CD8-positive, alpha-beta T cell (primary cell): ENCODE measurements at regions of chr12 and their contacts with region 1.

Region 1: DNA sequence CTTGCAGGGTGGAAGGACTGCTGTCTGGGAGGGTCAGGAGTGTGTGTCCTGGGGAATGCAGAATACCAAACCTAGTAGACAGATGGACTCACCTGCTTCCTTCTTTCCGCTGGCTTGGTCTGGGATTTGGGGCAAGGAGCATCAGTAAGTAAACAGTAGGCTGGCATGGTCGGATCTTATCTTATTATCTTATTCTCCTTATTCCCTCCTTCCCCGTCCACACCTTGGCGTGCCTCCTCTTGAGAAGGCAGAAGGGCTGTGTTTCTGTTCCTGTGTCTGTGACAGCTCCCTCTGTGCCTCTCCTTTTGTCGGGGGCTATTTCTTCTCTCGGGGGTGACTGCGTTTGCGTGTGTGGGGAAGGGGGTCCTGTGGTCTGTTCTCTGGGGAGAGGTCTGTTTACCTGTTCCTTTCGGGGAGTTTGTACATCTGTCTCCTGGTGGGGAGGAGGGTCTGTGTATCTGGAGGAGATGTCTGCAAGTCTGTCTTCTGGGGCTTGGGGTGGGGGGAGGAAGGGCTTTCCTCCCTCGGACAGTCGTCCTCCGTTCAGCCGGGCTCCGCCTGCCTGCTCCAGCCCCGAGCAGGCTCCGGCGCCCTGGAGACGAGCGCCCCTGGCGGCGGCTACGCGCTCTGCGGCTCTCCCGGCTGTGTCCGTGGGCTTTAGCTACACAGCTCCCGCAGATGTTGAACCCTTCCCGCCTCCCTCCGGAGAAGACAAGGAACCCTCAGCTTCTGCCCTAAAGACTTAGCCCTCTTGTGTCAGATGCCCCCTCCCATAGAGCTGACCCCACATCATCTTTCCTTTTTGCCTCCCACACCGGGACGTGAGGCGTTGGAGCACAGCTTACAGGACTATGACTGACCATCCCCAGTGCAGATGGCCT is 4.3 kb downstream of the KRT86 start:
- DNase-seq: peak; percentile 49 to 84 (median 68)
- ATAC-seq: peak; percentile 82
- H3K4me3 ChIP-seq: no peak overlapping the region
- H3K4me3 Mint-ChIP-seq: no peak overlapping the region
- H3K27ac ChIP-seq: no peak overlapping the region
- H3K27ac Mint-ChIP-seq: no peak overlapping the region
- H3K4me1 ChIP-seq: no peaks in the 10 kb centered on the region
- H3K4me1 Mint-ChIP-seq: peaks cover 6% of the 10 kb centered on the region
- H3K27me3 ChIP-seq: peaks cover 4 to 6% of the 10 kb centered on the region in 2 experiments
- H3K27me3 Mint-ChIP-seq: peaks cover 34% of the 10 kb centered on the region
- CTCF ChIP-seq: peak; percentile 90

Region 2: GRCh38 chr12:51832354-51833107 is 446.2 kb before region 1 on chr12:
- CTCF ChIA-PET with region 1: no interaction called
- POLR2A ChIA-PET with region 1: no interaction called
- intact Hi-C with region 1: no loop called
- DNase-seq: no peak
- ATAC-seq: no peak
- H3K4me3 ChIP-seq: no peak overlapping the region
- H3K4me3 Mint-ChIP-seq: peak overlapping the region; percentile 1
- H3K27ac ChIP-seq: no peak overlapping the region
- H3K27ac Mint-ChIP-seq: no peak overlapping the region
- H3K4me1 ChIP-seq: peaks cover 24% of the 10 kb centered on the region
- H3K4me1 Mint-ChIP-seq: peaks cover 26% of the 10 kb centered on the region
- H3K27me3 ChIP-seq: peaks cover 0 to 16% of the 10 kb centered on the region in 2 experiments
- H3K27me3 Mint-ChIP-seq: peaks cover 36% of the 10 kb centered on the region
- CTCF ChIP-seq: no peak

Region 3: GRCh38 chr12:52069327-52070184 is 209.2 kb before region 1 on chr12 and contains the start of gene ATG101:
- CTCF ChIA-PET with region 1: no interaction called
- POLR2A ChIA-PET with region 1: no interaction called
- intact Hi-C with region 1: no loop called
- DNase-seq: peak; percentile 72 to 96 (median 84)
- ATAC-seq: peak; percentile 93
- H3K4me3 ChIP-seq: peak within 1 kb of the TSS; percentile 93 to 98
- H3K4me3 Mint-ChIP-seq: peak within 1 kb of the TSS; percentile 98
- H3K27ac ChIP-seq: peak within 1 kb of the TSS; percentile 87 to 96
- H3K27ac Mint-ChIP-seq: peak within 1 kb of the TSS; percentile 99
- H3K4me1 ChIP-seq: peaks cover 33% of the 10 kb centered on the region
- H3K4me1 Mint-ChIP-seq: peaks cover 47% of the 10 kb centered on the region
- H3K27me3 ChIP-seq: no peaks in the 10 kb centered on the region
- H3K27me3 Mint-ChIP-seq: no peaks in the 10 kb centered on the region
- CTCF ChIP-seq: peak; percentile 47
- total RNA-seq, gene ATG101: 19.1 to 19.3 TPM

Region 4: GRCh38 chr12:52268212-52268611 is 10.6 kb before region 1 on chr12:
- CTCF ChIA-PET with region 1: interaction called, 19 read pairs
- POLR2A ChIA-PET with region 1: no interaction called
- intact Hi-C with region 1: no loop called
- DNase-seq: no peak
- ATAC-seq: no peak
- H3K4me3 ChIP-seq: no peak overlapping the region
- H3K4me3 Mint-ChIP-seq: no peak overlapping the region
- H3K27ac ChIP-seq: no peak overlapping the region
- H3K27ac Mint-ChIP-seq: no peak overlapping the region
- H3K4me1 ChIP-seq: no peaks in the 10 kb centered on the region
- H3K4me1 Mint-ChIP-seq: no peaks in the 10 kb centered on the region
- H3K27me3 ChIP-seq: no peaks in the 10 kb centered on the region
- H3K27me3 Mint-ChIP-seq: peaks cover 15% of the 10 kb centered on the region
- CTCF ChIP-seq: no peak

Region 5: GRCh38 chr12:52295663-52296062 is 16.9 kb after region 1 on chr12:
- CTCF ChIA-PET with region 1: interaction called, 24 read pairs
- POLR2A ChIA-PET with region 1: no interaction called
- intact Hi-C with region 1: no loop called
- DNase-seq: no peak
- ATAC-seq: no peak
- H3K4me3 ChIP-seq: no peak overlapping the region
- H3K4me3 Mint-ChIP-seq: no peak overlapping the region
- H3K27ac ChIP-seq: no peak overlapping the region
- H3K27ac Mint-ChIP-seq: no peak overlapping the region
- H3K4me1 ChIP-seq: no peaks in the 10 kb centered on the region
- H3K4me1 Mint-ChIP-seq: no peaks in the 10 kb centered on the region
- H3K27me3 ChIP-seq: peaks cover 0 to 4% of the 10 kb centered on the region in 2 experiments
- H3K27me3 Mint-ChIP-seq: peaks cover 34% of the 10 kb centered on the region
- CTCF ChIP-seq: no peak